GM12878 (cell line): ENCODE measurements at regions of chr7 and their contacts with region 1.

Region 1: GRCh38 chr7:92292981-92293380 is 47.2 kb downstream of the ANKIB1 start:
- DNase-seq: no peak
- ATAC-seq: peak; percentile 72
- H3K4me3 ChIP-seq: no peak overlapping the region
- H3K27ac ChIP-seq: no peak overlapping the region
- H3K4me1 ChIP-seq: peaks cover 21% of the 10 kb centered on the region
- H3K27me3 ChIP-seq: no peaks in the 10 kb centered on the region
- CTCF ChIP-seq: no peak
- EP300 ChIP-seq: no peak
- POLR2A ChIP-seq: no peak
- RAD21 ChIP-seq: no peak

Region 2: DNA sequence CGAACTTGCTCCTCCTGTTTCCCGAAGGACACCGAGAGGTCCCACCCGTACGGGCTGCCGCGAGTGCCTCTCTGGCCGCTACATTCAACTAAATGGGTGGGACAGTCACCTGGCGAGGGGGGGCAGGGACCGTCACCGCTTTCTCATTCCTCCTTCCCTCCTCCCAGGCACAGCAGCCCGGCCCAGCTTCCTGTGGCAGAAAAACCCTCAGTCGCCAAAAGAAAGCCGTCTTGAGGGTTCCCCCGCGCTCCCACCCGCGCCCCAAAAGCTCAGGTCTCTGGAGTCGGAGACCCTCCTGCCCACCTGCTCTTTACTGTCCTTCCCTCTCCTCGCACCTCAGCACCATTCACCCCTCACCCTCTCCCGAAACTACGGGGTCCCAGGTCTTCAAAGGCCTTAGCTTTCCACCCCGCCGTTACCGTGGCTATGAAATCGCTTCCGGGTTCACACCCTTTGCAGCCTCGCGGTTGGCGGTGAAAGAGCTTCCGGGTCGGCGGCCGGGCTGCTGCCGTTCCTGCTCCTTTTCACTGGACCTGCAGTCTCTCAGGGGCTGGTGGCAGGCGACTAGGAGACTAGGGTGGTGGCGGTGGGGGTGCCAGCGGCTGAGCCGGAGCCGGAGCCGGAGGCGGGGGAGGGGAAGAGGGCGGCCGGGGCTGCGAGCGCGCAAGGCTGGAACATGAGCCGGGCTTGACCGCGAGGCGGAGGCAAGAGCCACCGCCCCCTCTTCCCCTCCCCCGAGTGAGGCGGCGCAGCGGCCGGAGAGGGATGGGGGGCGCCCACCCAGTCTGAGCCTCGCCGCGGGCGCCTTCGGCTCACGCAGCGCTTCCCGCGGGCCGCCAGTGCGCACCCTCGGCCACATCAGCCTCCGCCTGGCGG is 47.3 kb before region 1 on chr7 and contains the starts of genes ANKIB1 and KRIT1:
- CTCF ChIA-PET with region 1: interaction called, 8 read pairs
- POLR2A ChIA-PET with region 1: interaction called, 10 read pairs
- RAD21 ChIA-PET with region 1: interaction called, 11 read pairs
- SMC1A ChIA-PET with region 1: interaction called, 13 read pairs
- in situ Hi-C with region 1: no loop called
- intact Hi-C with region 1: loop called (anchors 5 kb)
- DNase-seq: peak; percentile 51
- ATAC-seq: peak; percentile 84
- H3K4me3 ChIP-seq: peak within 1 kb of the TSS; percentile 93
- H3K27ac ChIP-seq: peak within 1 kb of the TSS; percentile 90
- H3K4me1 ChIP-seq: no peaks in the 10 kb centered on the region
- H3K27me3 ChIP-seq: no peaks in the 10 kb centered on the region
- CTCF ChIP-seq: peak; percentile 2 to 16 (median 13); a peak in 3 of 6 replicates
- EP300 ChIP-seq: no peak
- POLR2A ChIP-seq: peak; percentile 90
- RAD21 ChIP-seq: no peak
- polyA plus RNA-seq, gene ANKIB1: 9.7 to 14.6 TPM
- polyA plus RNA-seq, gene KRIT1: 12.0 to 12.8 TPM

Region 3: GRCh38 chr7:92279396-92280031 is 13.5 kb before region 1 on chr7:
- CTCF ChIA-PET with region 1: interaction called, 6 read pairs
- POLR2A ChIA-PET with region 1: interaction called, 5 read pairs
- RAD21 ChIA-PET with region 1: interaction called, 4 read pairs
- SMC1A ChIA-PET with region 1: interaction called, 13 read pairs
- in situ Hi-C with region 1: no loop called
- intact Hi-C with region 1: no loop called
- DNase-seq: no peak
- ATAC-seq: no peak
- H3K4me3 ChIP-seq: no peak overlapping the region
- H3K27ac ChIP-seq: no peak overlapping the region
- H3K4me1 ChIP-seq: peaks cover 10% of the 10 kb centered on the region; the same call in 1 of the 2 replicates
- H3K27me3 ChIP-seq: no peaks in the 10 kb centered on the region
- CTCF ChIP-seq: no peak
- EP300 ChIP-seq: no peak
- POLR2A ChIP-seq: no peak
- RAD21 ChIP-seq: no peak

Region 4: GRCh38 chr7:92306153-92306552 is 13.2 kb after region 1 on chr7:
- CTCF ChIA-PET with region 1: interaction called, 6 read pairs
- POLR2A ChIA-PET with region 1: no interaction called
- RAD21 ChIA-PET with region 1: no interaction called
- SMC1A ChIA-PET with region 1: interaction called, 11 read pairs
- in situ Hi-C with region 1: no loop called
- intact Hi-C with region 1: no loop called
- DNase-seq: no peak
- ATAC-seq: no peak
- H3K4me3 ChIP-seq: no peak overlapping the region
- H3K27ac ChIP-seq: no peak overlapping the region
- H3K4me1 ChIP-seq: no peaks in the 10 kb centered on the region
- H3K27me3 ChIP-seq: no peaks in the 10 kb centered on the region
- CTCF ChIP-seq: no peak
- EP300 ChIP-seq: no peak
- POLR2A ChIP-seq: no peak
- RAD21 ChIP-seq: no peak

Region 5: DNA sequence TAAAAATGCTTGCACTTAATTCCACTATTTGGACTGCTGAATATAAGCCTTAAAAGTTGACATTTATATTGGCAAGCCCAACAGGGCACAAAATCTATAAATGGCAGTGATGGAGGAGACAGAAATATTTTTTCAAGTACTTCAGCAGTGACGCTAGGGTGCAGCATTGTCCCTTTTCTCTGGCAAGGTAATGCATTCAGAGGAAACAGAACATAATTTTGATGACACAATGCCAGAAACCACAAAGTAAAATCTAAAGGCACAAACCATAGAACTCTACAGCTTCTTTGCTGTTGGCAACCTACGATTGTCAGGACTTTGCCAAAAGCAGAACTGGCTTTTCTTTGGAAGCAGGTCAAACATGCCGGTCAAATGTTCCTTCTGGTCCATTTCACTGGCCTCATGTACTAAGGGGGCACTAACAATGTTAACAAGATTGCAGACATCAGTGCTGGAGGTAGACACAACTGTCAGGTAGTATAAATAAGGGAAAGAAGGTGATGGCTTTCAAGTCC is 328.1 kb after region 1 on chr7:
- CTCF ChIA-PET with region 1: no interaction called
- POLR2A ChIA-PET with region 1: no interaction called
- RAD21 ChIA-PET with region 1: no interaction called
- SMC1A ChIA-PET with region 1: no interaction called
- in situ Hi-C with region 1: no loop called
- intact Hi-C with region 1: no loop called
- DNase-seq: peak; percentile 79
- ATAC-seq: peak; percentile 79
- H3K4me3 ChIP-seq: peak overlapping the region; percentile 12; the same call in 1 of the 2 replicates
- H3K27ac ChIP-seq: peak overlapping the region; percentile 75
- H3K4me1 ChIP-seq: peaks cover 16% of the 10 kb centered on the region
- H3K27me3 ChIP-seq: no peaks in the 10 kb centered on the region
- CTCF ChIP-seq: peak; percentile 64 to 94 (median 76); a peak in 5 of 6 replicates
- EP300 ChIP-seq: no peak
- POLR2A ChIP-seq: no peak
- RAD21 ChIP-seq: peak; percentile 95

Region 6: DNA sequence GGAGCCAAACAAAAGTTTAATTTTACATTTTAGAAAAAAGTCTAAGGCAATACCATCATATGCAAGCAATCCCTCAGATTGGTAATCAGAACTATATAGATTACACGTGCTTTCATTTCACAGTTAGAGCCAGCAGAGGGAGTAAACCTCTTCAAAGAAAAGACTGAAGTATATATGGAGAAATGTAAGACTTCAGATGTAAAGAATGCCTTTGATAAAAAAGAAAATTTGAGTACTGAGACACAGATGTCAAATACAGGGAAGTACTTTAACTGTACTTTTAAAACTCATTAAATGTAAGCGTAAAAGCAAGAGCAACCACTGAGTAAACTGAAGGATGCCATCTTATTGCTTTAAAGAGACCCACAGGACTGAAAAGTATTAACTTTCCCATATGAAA is 398.6 kb after region 1 on chr7:
- CTCF ChIA-PET with region 1: no interaction called
- POLR2A ChIA-PET with region 1: no interaction called
- RAD21 ChIA-PET with region 1: no interaction called
- SMC1A ChIA-PET with region 1: no interaction called
- in situ Hi-C with region 1: no loop called
- intact Hi-C with region 1: no loop called
- DNase-seq: peak; percentile 37
- ATAC-seq: peak; percentile 96
- H3K4me3 ChIP-seq: no peak overlapping the region
- H3K27ac ChIP-seq: no peak overlapping the region
- H3K4me1 ChIP-seq: no peaks in the 10 kb centered on the region
- H3K27me3 ChIP-seq: no peaks in the 10 kb centered on the region
- CTCF ChIP-seq: peak; percentile 45 to 60 (median 58); a peak in 5 of 6 replicates
- EP300 ChIP-seq: no peak
- POLR2A ChIP-seq: no peak
- RAD21 ChIP-seq: peak; percentile 86